ENCODE measurements at regions of chr4 and their contacts with region 1.

Region 1: DNA sequence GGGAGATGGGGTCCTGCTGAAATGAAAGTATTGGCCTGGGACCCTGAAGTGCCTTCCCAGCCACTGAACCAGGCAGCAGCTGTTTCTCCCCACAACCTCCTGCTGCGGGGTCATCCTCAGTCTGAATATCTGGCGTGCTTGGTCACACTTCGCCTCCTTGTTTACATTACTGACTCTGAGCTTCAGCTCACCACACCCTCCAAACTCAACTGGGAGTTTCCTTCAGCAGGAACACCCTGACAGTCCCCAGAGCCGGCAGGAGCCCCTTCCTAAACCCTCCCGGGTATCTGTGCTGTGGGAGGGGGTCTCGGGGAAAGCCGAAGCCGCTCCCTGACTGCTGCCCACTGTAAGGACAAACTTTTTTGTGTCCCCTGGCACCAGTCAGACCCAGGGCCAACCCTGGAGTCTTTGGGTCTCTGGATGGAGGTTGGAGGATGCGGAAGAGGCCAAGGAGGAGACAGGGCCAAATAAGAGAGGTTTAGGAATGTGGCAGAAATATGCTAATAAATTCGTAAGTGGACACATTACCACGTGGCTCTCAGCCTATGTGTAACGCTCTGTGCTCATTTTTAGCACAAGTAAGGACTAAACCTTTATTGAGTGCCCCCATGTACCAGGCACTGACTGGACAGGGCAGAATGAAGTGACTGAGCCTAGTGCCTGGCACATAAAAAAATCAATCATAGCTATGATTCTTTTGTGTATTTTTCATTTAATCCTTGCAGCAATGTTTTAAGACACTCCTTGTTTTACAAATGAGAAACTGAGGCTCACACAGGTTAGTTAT is 20.7 kb downstream of the FHDC1 start:
- DNase-seq: no peak
- ATAC-seq: peak in 1 of 2 donors; percentile 32

Region 2: GRCh38 chr4:152289941-152290340 is 666.9 kb before region 1 on chr4:
- intact Hi-C with region 1: loop called in 1 of 2 experiments (anchors 10 kb)
- DNase-seq: no peak
- ATAC-seq: no peak

Measured in left cardiac atrium (tissue), 4 donors.